ENCODE measurements at regions of chr10 and their contacts with region 1.

Region 1: GRCh38 chr10:115514895-115515294 is 421.7 kb downstream of the ATRNL1 start:
- DNase-seq: no peak
- H3K4me3 Mint-ChIP-seq: no peak overlapping the region
- H3K27ac Mint-ChIP-seq: no peak overlapping the region
- H3K4me1 Mint-ChIP-seq: no peaks in the 10 kb centered on the region
- H3K27me3 Mint-ChIP-seq: peaks cover 33% of the 10 kb centered on the region
- CTCF ChIP-seq: no peak

Region 2: GRCh38 chr10:115456822-115457221 is 58.1 kb before region 1 on chr10:
- CTCF ChIA-PET with region 1: no interaction called
- POLR2A ChIA-PET with region 1: no interaction called
- intact Hi-C with region 1: no loop called
- DNase-seq: no peak
- H3K4me3 Mint-ChIP-seq: no peak overlapping the region
- H3K27ac Mint-ChIP-seq: no peak overlapping the region
- H3K4me1 Mint-ChIP-seq: no peaks in the 10 kb centered on the region
- H3K27me3 Mint-ChIP-seq: peaks cover 71% of the 10 kb centered on the region
- CTCF ChIP-seq: no peak

Region 3: DNA sequence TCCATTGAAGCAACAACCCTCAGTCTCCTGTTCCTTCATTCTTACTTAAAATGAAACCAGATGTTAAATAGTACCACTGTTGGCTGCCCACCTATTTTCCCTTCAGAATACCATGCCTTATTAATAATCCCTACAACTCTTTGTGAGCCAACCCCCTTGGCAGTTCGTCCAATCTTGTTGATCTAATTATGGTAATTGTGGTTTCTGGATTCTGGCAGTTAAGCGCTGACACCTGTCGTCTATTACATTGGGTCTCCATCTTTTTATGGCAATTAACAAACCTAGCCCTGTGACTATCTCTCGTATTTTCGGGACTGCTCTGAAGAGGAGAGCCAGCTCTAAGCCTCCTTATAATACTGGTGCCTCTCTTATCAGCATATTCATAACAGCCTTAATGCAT is 10.2 kb after region 1 on chr10:
- CTCF ChIA-PET with region 1: no interaction called
- POLR2A ChIA-PET with region 1: no interaction called
- intact Hi-C with region 1: loop called (anchors 1 kb)
- DNase-seq: no peak
- H3K4me3 Mint-ChIP-seq: no peak overlapping the region
- H3K27ac Mint-ChIP-seq: no peak overlapping the region
- H3K4me1 Mint-ChIP-seq: no peaks in the 10 kb centered on the region
- H3K27me3 Mint-ChIP-seq: peaks cover 34% of the 10 kb centered on the region
- CTCF ChIP-seq: no peak

Measured in MCF 10A (cell line).